Dendritic cell treated with granulocyte-macrophage colony-stimulating factor and Interleukin-4, amounts not matched to agents 40 ng/mL and 50 ng/mL, for 4 days (primary cell): ENCODE measurements at regions of chr6 and their contacts with region 1.

Region 1: DNA sequence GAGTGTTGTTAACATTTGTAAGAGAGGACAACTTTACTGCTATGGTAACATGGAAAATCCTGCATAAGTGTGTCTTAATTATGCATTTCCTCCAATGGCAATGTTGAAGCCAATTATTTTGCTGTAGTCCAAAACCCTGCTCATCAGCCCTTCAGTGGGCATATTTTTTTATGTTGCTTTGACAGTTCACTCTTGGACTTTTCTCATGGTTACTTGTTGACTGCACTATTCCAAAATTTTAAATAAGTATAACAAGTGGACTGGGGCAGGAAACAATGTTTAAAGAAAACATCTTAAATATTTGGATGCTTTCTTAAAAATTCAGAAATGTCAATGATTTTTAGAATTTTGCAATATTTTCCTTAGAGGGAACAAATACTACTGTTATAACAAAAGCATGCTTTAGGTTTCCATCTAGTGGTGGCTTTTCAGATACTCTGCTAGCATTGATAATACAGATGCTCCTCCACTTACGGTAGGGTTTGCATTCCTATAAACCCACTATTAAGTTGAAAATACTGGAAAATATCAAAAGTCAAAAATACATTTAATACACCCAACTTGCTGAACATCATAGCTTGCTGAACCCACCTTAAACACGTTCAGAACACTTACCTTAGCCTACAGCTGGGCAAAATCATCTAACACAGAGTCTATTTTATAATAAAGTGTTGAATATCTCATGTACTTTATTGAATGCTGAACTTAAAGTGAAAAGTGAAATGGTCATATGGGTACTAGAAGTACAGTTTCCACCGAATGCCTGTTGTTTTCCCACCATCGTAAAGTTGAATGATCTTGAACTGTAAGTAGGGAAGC is 86.4 kb downstream of the ADGRG6 start:
- H3K4me3 Mint-ChIP-seq: no peak overlapping the region
- H3K27ac Mint-ChIP-seq: no peak overlapping the region
- H3K4me1 Mint-ChIP-seq: no peaks in the 10 kb centered on the region
- H3K27me3 Mint-ChIP-seq: no peaks in the 10 kb centered on the region

Region 2: GRCh38 chr6:142155895-142156757 is 232.1 kb before region 1 on chr6:
- intact Hi-C with region 1: loop called (anchors 2 kb)
- H3K4me3 Mint-ChIP-seq: no peak overlapping the region
- H3K27ac Mint-ChIP-seq: no peak overlapping the region
- H3K4me1 Mint-ChIP-seq: peaks cover 25% of the 10 kb centered on the region
- H3K27me3 Mint-ChIP-seq: no peaks in the 10 kb centered on the region

Region 3: DNA sequence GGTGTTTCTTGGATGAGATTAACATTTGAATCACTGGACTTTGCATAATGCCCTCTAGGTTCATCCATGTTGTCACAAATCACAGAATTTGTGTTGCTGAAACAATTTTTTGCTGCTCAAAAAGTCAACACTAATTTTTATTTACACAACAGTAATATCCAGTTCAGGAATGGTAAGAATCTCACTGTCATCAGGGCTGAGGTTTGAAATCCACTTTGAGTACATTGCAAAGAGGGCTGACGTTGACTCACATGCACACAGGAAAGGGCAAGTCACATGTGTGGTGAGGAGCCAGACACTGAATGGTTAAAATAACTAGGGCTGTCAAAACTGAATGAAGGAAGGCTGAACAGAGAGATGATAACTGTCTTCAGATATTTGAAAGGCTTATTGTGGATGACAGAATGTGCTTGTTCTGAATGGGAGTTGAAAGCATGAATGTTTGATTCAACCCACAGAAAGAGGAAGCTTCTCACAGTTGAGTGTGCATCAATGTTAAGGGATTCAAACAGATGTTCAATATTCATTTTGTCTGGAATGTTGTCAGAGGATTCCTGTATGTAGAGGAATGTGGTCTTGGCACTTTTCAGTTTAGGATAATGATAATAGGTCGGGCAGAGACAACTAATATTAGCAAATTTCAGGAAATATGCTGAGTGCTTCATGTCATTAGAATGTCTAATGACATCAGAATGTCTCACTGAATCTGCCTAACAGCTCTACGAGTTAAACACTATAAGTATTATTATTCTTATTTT is 90.0 kb before region 1 on chr6:
- intact Hi-C with region 1: loop called (anchors 5 kb)
- H3K4me3 Mint-ChIP-seq: no peak overlapping the region
- H3K27ac Mint-ChIP-seq: no peak overlapping the region
- H3K4me1 Mint-ChIP-seq: peaks cover 46% of the 10 kb centered on the region
- H3K27me3 Mint-ChIP-seq: peaks cover 27% of the 10 kb centered on the region